Left ventricle myocardium superior (tissue), 1 donor: ENCODE measurements at regions of chr11 and their contacts with region 1.

Region 1: DNA sequence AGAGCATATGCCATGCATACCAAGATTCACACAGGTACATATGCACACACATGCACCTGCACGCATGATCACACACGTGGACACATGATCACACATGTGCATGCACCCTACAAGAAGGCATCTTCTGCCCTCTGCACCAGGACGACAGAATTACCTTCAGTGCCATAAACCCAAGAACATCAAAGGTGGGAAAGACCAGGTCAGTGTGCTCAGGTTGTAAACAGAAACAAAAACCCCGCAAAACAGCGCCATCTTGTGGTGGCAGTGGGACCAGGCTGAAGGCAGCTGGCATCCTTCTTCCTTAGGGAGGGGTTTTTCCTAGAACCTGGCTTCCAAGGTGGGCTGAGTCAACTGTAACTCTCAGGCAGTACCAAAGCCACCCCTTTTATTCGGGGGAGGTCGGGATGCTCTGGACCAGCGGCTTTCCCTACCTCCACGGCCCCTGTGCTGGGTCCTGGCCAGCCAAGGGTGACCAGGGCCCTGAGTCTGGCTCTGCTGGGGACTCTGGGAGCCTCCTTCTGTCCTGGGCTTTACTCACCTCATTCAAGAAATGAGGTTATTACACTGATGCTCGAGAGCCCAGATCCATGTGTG is 69.4 kb upstream of the FGF3 start:
- DNase-seq: peak; percentile 70
- ATAC-seq: peak; percentile 66

Region 2: DNA sequence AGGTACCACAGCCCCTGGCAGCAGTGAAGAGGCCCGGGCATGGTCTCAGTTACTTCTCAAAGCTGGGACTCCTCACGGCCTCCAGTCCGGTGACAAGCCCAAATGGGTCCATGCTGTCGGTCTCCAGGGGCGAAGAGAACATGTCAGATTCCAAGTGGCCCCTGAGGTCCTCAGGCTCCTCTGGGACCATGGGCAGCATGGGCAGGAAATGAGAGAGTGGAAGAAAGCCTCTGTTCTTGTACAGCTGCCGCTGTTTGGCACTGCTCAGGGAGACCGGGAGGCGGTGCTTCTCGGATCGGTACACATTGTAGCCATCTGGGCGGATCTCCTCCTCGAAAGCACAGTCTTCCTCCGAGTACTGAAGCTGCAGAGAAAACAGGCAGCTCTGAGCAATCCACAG is 189.4 kb before region 1 on chr11:
- intact Hi-C with region 1: loop called (anchors 10 kb)
- DNase-seq: no peak
- ATAC-seq: peak; percentile 42